Mammary epithelial cell (primary cell): ENCODE measurements at regions of chr2 and their contacts with region 1.

Region 1: GRCh38 chr2:218959141-218959731 is at the start of gene CDK5R2:
- DNase-seq: peak; percentile 74
- H3K4me3 ChIP-seq: peak within 1 kb of the TSS; percentile 30 to 55 (median 51)
- H3K27ac ChIP-seq: no peak within 1 kb of the TSS
- H3K4me1 ChIP-seq: peaks cover 26% of the 10 kb centered on the region
- H3K27me3 ChIP-seq: peaks cover 28% of the 10 kb centered on the region
- CTCF ChIP-seq: no peak
- total RNA-seq, gene CDK5R2: 0.49 TPM in 1 of 2 donors, not detected in the other

Region 2: GRCh38 chr2:218924757-218925156 is 34.5 kb before region 1 on chr2:
- CTCF ChIA-PET with region 1: no interaction called
- dilution Hi-C with region 1: loop called (anchors 5 kb)
- in situ Hi-C with region 1: no loop called
- intact Hi-C with region 1: no loop called
- DNase-seq: no peak
- H3K4me3 ChIP-seq: no peak overlapping the region
- H3K27ac ChIP-seq: no peak overlapping the region
- H3K4me1 ChIP-seq: no peaks in the 10 kb centered on the region
- H3K27me3 ChIP-seq: no peaks in the 10 kb centered on the region
- CTCF ChIP-seq: no peak